ENCODE measurements at regions of chr15 and their contacts with region 1.

Region 1: GRCh38 chr15:79380755-79381497 is 51.2 kb upstream of the MINAR1 start:
- DNase-seq: peak; percentile 81
- ATAC-seq: peak; percentile 91
- H3K4me3 Mint-ChIP-seq: no peak overlapping the region
- H3K27ac Mint-ChIP-seq: no peak overlapping the region
- H3K4me1 Mint-ChIP-seq: peaks cover 3% of the 10 kb centered on the region
- H3K27me3 Mint-ChIP-seq: no peaks in the 10 kb centered on the region

Region 2: GRCh38 chr15:79365765-79366164 is 15.2 kb before region 1 on chr15:
- CTCF ChIA-PET with region 1: interaction called, 20 read pairs
- DNase-seq: no peak
- ATAC-seq: no peak
- H3K4me3 Mint-ChIP-seq: no peak overlapping the region
- H3K27ac Mint-ChIP-seq: no peak overlapping the region
- H3K4me1 Mint-ChIP-seq: no peaks in the 10 kb centered on the region
- H3K27me3 Mint-ChIP-seq: no peaks in the 10 kb centered on the region

Region 3: DNA sequence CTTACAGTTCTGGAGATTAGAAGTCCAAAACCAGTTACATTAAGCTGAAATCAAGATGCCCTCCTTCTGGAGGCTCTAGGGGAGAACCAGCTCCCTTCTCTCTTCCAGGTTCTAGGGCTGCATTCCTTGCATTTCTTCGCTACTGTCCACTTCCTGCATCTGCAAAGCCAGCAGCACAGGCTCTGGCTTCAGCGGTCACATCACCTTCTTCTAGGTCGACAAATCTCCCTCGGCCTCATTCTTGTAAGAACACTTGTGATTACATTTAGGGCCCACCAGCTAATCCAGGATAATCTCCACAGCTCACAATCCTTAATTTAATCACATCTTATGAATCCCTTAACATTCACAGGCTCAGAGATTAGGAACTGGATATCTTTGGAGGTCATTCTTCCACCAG is 125.0 kb after region 1 on chr15:
- CTCF ChIA-PET with region 1: no interaction called
- DNase-seq: no peak
- ATAC-seq: no peak
- H3K4me3 Mint-ChIP-seq: no peak overlapping the region
- H3K27ac Mint-ChIP-seq: no peak overlapping the region
- H3K4me1 Mint-ChIP-seq: no peaks in the 10 kb centered on the region
- H3K27me3 Mint-ChIP-seq: peaks cover 4% of the 10 kb centered on the region

Region 4: GRCh38 chr15:79596051-79596507 is 215.2 kb after region 1 on chr15:
- CTCF ChIA-PET with region 1: interaction called, 43 read pairs
- DNase-seq: peak; percentile 69
- ATAC-seq: peak; percentile 93
- H3K4me3 Mint-ChIP-seq: no peak overlapping the region
- H3K27ac Mint-ChIP-seq: no peak overlapping the region
- H3K4me1 Mint-ChIP-seq: no peaks in the 10 kb centered on the region
- H3K27me3 Mint-ChIP-seq: peaks cover 28% of the 10 kb centered on the region

Region 5: GRCh38 chr15:79981831-79982455 is 601.0 kb after region 1 on chr15:
- CTCF ChIA-PET with region 1: no interaction called
- DNase-seq: peak; percentile 51
- ATAC-seq: peak; percentile 42
- H3K4me3 Mint-ChIP-seq: no peak overlapping the region
- H3K27ac Mint-ChIP-seq: peak overlapping the region; percentile 12
- H3K4me1 Mint-ChIP-seq: peaks cover 21% of the 10 kb centered on the region
- H3K27me3 Mint-ChIP-seq: no peaks in the 10 kb centered on the region